ENCODE measurements at regions of chr2 and their contacts with region 1.

Region 1: GRCh38 chr2:218229239-218229638 is 12.2 kb downstream of the ARPC2 start:
- DNase-seq: peak; percentile 38
- H3K4me3 Mint-ChIP-seq: peak overlapping the region; percentile 43
- H3K27ac Mint-ChIP-seq: peak overlapping the region; percentile 80
- H3K4me1 Mint-ChIP-seq: peaks cover 63% of the 10 kb centered on the region
- H3K27me3 Mint-ChIP-seq: no peaks in the 10 kb centered on the region
- CTCF ChIP-seq: no peak

Region 2: GRCh38 chr2:218125626-218126080 is 103.6 kb before region 1 on chr2 and contains the start of gene CXCR2:
- CTCF ChIA-PET with region 1: no interaction called
- intact Hi-C with region 1: no loop called
- DNase-seq: no peak
- H3K4me3 Mint-ChIP-seq: no peak within 1 kb of the TSS
- H3K27ac Mint-ChIP-seq: no peak within 1 kb of the TSS
- H3K4me1 Mint-ChIP-seq: no peaks in the 10 kb centered on the region
- H3K27me3 Mint-ChIP-seq: peaks cover 73% of the 10 kb centered on the region
- CTCF ChIP-seq: no peak
- total RNA-seq, gene CXCR2: not detected in 2 replicates

Region 3: GRCh38 chr2:218217360-218218267 is 11.6 kb before region 1 on chr2:
- CTCF ChIA-PET with region 1: interaction called, 5 read pairs
- intact Hi-C with region 1: loop called (anchors 1 kb)
- DNase-seq: peak; percentile 45
- H3K4me3 Mint-ChIP-seq: peak overlapping the region; percentile 89
- H3K27ac Mint-ChIP-seq: peak overlapping the region; percentile 96
- H3K4me1 Mint-ChIP-seq: peaks cover 55% of the 10 kb centered on the region
- H3K27me3 Mint-ChIP-seq: no peaks in the 10 kb centered on the region
- CTCF ChIP-seq: no peak

Measured in Calu3 (cell line).